Activated T-helper 2 cell treated with anti-CD3 and anti-CD28 coated beads, Interferon-gamma antibody, Interleukin-2, Interleukin-4, amounts not matched to agents 10 μg/mL and 5 μg/mL and 100 μg/mL, durations not matched to agents 14 hours and 24 hours and 36 hours (primary cell): ENCODE measurements at regions of chr15 and their contacts with region 1.

Region 1: GRCh38 chr15:56245871-56246814 is 2.5 kb upstream of the RFX7 start:
- DNase-seq: peak; percentile 82
- H3K4me3 Mint-ChIP-seq: peak overlapping the region; percentile 89
- H3K27ac Mint-ChIP-seq: peak overlapping the region; percentile 98
- H3K4me1 Mint-ChIP-seq: peaks cover 31% of the 10 kb centered on the region
- H3K27me3 Mint-ChIP-seq: peaks cover 1% of the 10 kb centered on the region

Region 2: DNA sequence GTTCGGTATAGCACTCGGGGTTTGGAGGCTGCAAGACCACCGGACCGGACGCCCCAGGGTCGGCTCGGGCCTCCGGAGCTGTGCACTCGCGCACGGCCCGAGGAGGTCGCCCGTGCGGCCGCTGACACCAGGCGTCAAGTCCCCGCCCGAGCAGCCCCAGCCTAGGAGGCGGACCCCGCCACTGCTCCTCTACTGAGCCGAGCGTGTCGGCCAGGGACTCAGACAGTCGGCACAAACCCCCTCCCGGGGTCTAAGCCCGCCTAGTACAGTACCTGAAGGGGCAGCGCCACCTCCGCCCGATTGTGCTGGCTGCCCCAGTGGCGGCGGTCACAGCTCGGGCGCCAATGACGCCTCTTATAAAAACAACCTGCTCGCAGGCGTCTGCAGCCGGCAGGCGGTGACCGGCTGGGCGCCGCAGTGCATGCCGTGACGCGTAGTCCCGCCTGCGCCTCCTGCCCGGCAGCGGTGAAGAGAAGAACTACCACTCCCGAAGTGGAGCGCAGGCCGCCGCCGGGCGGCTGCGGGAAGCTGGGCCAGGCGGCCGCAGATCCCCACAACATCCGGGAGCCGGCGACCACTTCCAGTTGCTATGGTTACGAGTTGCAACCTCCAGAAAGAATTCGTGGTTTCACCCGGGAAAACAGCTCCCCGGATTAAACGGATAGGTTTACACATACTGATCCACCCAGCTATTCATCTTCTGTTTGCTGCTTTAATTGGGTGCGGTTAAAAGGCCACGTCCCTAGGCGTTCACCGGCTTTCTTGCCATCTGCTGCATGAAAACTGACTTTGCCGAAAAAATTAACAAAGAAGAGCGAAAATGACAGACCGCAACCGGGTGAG is 838.0 kb before region 1 on chr15 and contains the starts of genes CCPG1 and PIERCE2:
- intact Hi-C with region 1: loop called (anchors 10 kb)
- DNase-seq: peak; percentile 89
- H3K4me3 Mint-ChIP-seq: peak within 1 kb of the TSS; percentile 90
- H3K27ac Mint-ChIP-seq: peak within 1 kb of the TSS; percentile 86
- H3K4me1 Mint-ChIP-seq: peaks cover 23% of the 10 kb centered on the region
- H3K27me3 Mint-ChIP-seq: peaks cover 1% of the 10 kb centered on the region
- total RNA-seq, gene CCPG1: 8.9 and 9.8 TPM in 2 replicates
- total RNA-seq, gene PIERCE2: not detected in 2 replicates

Region 3: GRCh38 chr15:56042982-56043980 is 202.9 kb before region 1 on chr15:
- intact Hi-C with region 1: loop called (anchors 2 kb)
- DNase-seq: peak; percentile 12
- H3K4me3 Mint-ChIP-seq: peak overlapping the region; percentile 35
- H3K27ac Mint-ChIP-seq: peak overlapping the region; percentile 80
- H3K4me1 Mint-ChIP-seq: peaks cover 32% of the 10 kb centered on the region
- H3K27me3 Mint-ChIP-seq: peaks cover 4% of the 10 kb centered on the region

Region 4: GRCh38 chr15:56150204-56150603 is 95.9 kb before region 1 on chr15:
- intact Hi-C with region 1: no loop called
- DNase-seq: no peak
- H3K4me3 Mint-ChIP-seq: no peak overlapping the region
- H3K27ac Mint-ChIP-seq: no peak overlapping the region
- H3K4me1 Mint-ChIP-seq: peaks cover 13% of the 10 kb centered on the region
- H3K27me3 Mint-ChIP-seq: no peaks in the 10 kb centered on the region

Region 5: GRCh38 chr15:56168394-56168793 is 77.7 kb before region 1 on chr15:
- intact Hi-C with region 1: loop called (anchors 5 kb)
- DNase-seq: no peak
- H3K4me3 Mint-ChIP-seq: no peak overlapping the region
- H3K27ac Mint-ChIP-seq: no peak overlapping the region
- H3K4me1 Mint-ChIP-seq: peaks cover 43% of the 10 kb centered on the region
- H3K27me3 Mint-ChIP-seq: no peaks in the 10 kb centered on the region

Region 6: DNA sequence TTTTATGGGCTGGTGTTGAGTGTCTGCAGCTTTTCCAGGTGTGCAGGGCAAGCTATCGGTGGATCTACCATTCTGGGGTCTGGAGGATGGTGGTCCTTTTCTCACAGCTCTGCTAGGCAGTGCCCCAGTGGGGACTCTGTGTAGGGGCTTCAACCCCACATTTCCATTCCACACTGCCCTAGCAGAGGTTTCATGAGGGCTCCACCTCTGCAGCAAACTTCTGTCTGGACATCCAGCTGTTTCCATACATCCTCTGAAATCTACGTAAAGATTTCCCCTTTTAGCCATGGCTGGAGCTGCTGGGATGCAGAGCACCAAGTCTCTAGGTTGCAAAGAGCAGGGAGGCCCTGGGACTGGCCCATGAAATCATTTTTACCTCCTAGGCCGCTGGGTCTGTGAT is 14.1 kb before region 1 on chr15:
- intact Hi-C with region 1: no loop called
- DNase-seq: no peak
- H3K4me3 Mint-ChIP-seq: no peak overlapping the region
- H3K27ac Mint-ChIP-seq: no peak overlapping the region
- H3K4me1 Mint-ChIP-seq: peaks cover 18% of the 10 kb centered on the region
- H3K27me3 Mint-ChIP-seq: no peaks in the 10 kb centered on the region

Region 7: GRCh38 chr15:56365075-56365711 is 119.0 kb after region 1 on chr15 and contains the start of gene TEX9:
- intact Hi-C with region 1: loop called (anchors 2 kb)
- DNase-seq: peak; percentile 76
- H3K4me3 Mint-ChIP-seq: peak within 1 kb of the TSS; percentile 85
- H3K27ac Mint-ChIP-seq: no peak within 1 kb of the TSS
- H3K4me1 Mint-ChIP-seq: peaks cover 16% of the 10 kb centered on the region
- H3K27me3 Mint-ChIP-seq: peaks cover 45% of the 10 kb centered on the region
- total RNA-seq, gene TEX9: 0.27 and 0.44 TPM in 2 replicates

Region 8: GRCh38 chr15:56786966-56787365 is 540.8 kb after region 1 on chr15:
- intact Hi-C with region 1: loop called (anchors 5 kb)
- DNase-seq: no peak
- H3K4me3 Mint-ChIP-seq: no peak overlapping the region
- H3K27ac Mint-ChIP-seq: peak overlapping the region; percentile 70
- H3K4me1 Mint-ChIP-seq: peaks cover 16% of the 10 kb centered on the region
- H3K27me3 Mint-ChIP-seq: no peaks in the 10 kb centered on the region